Caco-2 (cell line): ENCODE measurements at regions of chr12 and their contacts with region 1.

Region 1: GRCh38 chr12:48758221-48758620 is 30.7 kb downstream of the ADCY6 start:
- DNase-seq: no peak
- H3K4me3 ChIP-seq: no peak overlapping the region
- H3K4me3 Mint-ChIP-seq: peak overlapping the region; percentile 0
- H3K27ac Mint-ChIP-seq: peak overlapping the region; percentile 79
- H3K4me1 ChIP-seq: peaks cover 22% of the 10 kb centered on the region
- H3K4me1 Mint-ChIP-seq: peaks cover 12% of the 10 kb centered on the region
- H3K27me3 ChIP-seq: no peaks in the 10 kb centered on the region
- H3K27me3 Mint-ChIP-seq: no peaks in the 10 kb centered on the region
- CTCF ChIP-seq: no peak

Region 2: DNA sequence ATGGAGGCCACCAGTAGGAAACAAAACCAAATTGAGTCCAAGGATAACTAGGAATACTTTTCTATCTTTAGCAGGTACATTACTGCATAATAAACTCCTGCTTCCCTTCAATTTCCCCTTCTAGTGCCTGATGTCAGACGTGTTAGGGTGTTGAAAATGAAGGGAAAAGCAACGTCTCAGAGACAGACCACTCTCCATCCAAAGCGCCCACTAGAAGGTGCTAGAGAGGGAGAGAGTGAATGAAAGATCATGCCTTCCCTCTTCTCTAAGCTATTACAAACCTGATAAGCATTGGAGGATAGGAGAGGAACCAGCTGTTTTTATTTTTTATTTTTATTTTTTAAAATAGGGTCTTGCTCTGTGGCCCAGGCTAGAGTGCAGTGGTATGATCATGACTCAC is 471.6 kb before region 1 on chr12:
- CTCF ChIA-PET with region 1: no interaction called
- POLR2A ChIA-PET with region 1: no interaction called
- intact Hi-C with region 1: no loop called
- DNase-seq: peak in 1 of 2 experiments; percentile 31
- H3K4me3 ChIP-seq: no peak overlapping the region
- H3K4me3 Mint-ChIP-seq: no peak overlapping the region
- H3K27ac Mint-ChIP-seq: no peak overlapping the region
- H3K4me1 ChIP-seq: no peaks in the 10 kb centered on the region
- H3K4me1 Mint-ChIP-seq: no peaks in the 10 kb centered on the region
- H3K27me3 ChIP-seq: no peaks in the 10 kb centered on the region
- H3K27me3 Mint-ChIP-seq: peaks cover 10% of the 10 kb centered on the region
- CTCF ChIP-seq: peak; percentile 44 to 63

Region 3: GRCh38 chr12:48681738-48682532 is 76.3 kb before region 1 on chr12 and contains the start of gene KANSL2:
- CTCF ChIA-PET with region 1: interaction called, 7 read pairs
- POLR2A ChIA-PET with region 1: interaction called, 11 read pairs
- intact Hi-C with region 1: no loop called
- DNase-seq: peak; percentile 99
- H3K4me3 ChIP-seq: peak within 1 kb of the TSS; percentile 83
- H3K4me3 Mint-ChIP-seq: peak within 1 kb of the TSS; percentile 92
- H3K27ac Mint-ChIP-seq: peak within 1 kb of the TSS; percentile 93
- H3K4me1 ChIP-seq: peaks cover 24% of the 10 kb centered on the region; the same call in 1 of the 2 replicates
- H3K4me1 Mint-ChIP-seq: peaks cover 14% of the 10 kb centered on the region
- H3K27me3 ChIP-seq: no peaks in the 10 kb centered on the region
- H3K27me3 Mint-ChIP-seq: no peaks in the 10 kb centered on the region
- CTCF ChIP-seq: no peak
- total RNA-seq, gene KANSL2: 59.7 and 67.2 TPM in 2 replicates

Region 4: GRCh38 chr12:48728807-48729206 is 29.4 kb before region 1 on chr12:
- CTCF ChIA-PET with region 1: no interaction called
- POLR2A ChIA-PET with region 1: no interaction called
- intact Hi-C with region 1: no loop called
- DNase-seq: no peak
- H3K4me3 ChIP-seq: no peak overlapping the region
- H3K4me3 Mint-ChIP-seq: no peak overlapping the region
- H3K27ac Mint-ChIP-seq: no peak overlapping the region
- H3K4me1 ChIP-seq: peaks cover 6% of the 10 kb centered on the region
- H3K4me1 Mint-ChIP-seq: no peaks in the 10 kb centered on the region
- H3K27me3 ChIP-seq: no peaks in the 10 kb centered on the region
- H3K27me3 Mint-ChIP-seq: no peaks in the 10 kb centered on the region
- CTCF ChIP-seq: no peak

Region 5: DNA sequence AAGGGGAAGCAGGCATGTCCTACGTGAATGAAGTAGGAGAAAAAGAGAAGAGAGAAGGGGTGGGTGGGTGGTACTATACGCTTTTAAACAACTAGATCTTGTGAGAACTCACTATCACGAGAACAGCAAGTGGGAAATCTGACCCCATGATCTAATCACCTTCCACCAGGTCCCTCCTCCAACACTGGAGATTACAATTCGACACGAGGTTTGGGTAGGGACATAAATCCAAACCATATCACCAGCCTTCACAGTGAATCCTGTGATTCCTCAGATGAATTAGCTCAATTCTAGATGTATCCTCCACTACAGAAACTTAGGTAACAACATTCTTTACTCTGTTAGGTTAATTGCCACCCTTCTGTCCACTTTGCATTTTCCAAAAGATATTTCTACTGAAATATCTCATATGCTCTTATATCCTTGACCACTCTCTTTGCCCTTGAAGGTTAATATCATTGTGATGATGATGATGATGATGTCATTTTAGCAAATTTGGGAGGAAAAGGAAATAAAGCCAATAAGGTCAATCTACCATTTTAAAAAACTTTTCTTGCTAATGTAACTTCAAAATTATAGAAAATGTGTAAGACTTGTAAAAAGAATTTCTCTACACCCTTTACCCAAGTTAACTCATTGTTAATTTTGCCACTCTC is 18.5 kb before region 1 on chr12:
- CTCF ChIA-PET with region 1: interaction called, 8 read pairs
- POLR2A ChIA-PET with region 1: interaction called, 14 read pairs
- intact Hi-C with region 1: no loop called
- DNase-seq: no peak
- H3K4me3 ChIP-seq: no peak overlapping the region
- H3K4me3 Mint-ChIP-seq: no peak overlapping the region
- H3K27ac Mint-ChIP-seq: no peak overlapping the region
- H3K4me1 ChIP-seq: no peaks in the 10 kb centered on the region
- H3K4me1 Mint-ChIP-seq: no peaks in the 10 kb centered on the region
- H3K27me3 ChIP-seq: no peaks in the 10 kb centered on the region
- H3K27me3 Mint-ChIP-seq: peaks cover 4% of the 10 kb centered on the region
- CTCF ChIP-seq: no peak

Region 6: DNA sequence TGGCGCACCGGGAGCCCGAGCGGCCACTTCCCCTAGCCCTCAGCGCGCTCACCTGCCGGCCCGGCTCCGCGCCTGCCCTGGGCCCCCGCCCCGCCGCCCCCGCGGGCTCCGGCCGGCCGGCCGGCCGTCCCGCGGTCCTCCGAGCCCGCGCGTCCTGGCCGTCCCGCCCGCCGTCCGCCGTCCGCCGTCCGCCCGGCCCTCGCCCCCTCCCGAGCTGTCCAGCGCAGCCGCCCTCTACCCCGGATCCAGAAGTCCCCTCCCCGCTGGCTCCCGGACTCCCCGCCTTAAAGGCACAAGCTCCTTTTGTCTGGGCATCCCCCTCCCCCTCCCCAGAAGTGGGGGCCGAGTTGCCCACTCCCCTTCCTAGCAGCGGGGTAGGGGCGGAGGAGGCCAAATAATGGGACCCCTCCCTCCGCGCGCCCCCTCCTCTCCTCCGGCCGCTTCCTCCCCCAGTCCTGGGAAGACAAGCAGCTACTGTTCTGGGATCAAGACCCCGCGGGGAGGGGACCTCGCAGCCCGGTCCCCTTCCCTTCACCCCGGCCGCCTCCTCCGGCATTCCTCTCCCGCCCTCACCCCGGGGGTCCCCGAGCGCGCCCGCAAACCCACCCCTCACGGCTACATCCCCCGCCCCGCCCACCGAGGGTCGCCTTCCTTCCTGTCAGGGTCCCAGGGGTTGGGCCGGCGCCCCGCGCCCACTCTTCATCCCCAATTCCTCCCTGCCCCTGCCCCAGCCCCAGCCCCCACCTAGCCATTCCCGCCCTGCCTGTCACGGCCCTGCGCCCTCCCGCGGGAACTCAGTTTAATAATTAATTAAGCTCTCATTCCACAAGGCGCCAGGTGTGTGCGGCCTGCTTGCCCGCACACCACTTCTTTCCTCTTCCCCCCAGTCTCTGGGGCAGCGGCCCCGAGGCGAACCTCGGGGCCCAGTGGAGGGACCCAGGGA is 30.9 kb after region 1 on chr12 and contains the start of gene ADCY6:
- CTCF ChIA-PET with region 1: interaction called, 148 read pairs
- POLR2A ChIA-PET with region 1: interaction called, 27 read pairs
- intact Hi-C with region 1: loop called (anchors 1 kb)
- DNase-seq: peak; percentile 94
- H3K4me3 ChIP-seq: peak within 1 kb of the TSS; percentile 88
- H3K4me3 Mint-ChIP-seq: peak within 1 kb of the TSS; percentile 84
- H3K27ac Mint-ChIP-seq: peak within 1 kb of the TSS; percentile 91
- H3K4me1 ChIP-seq: peaks cover 29% of the 10 kb centered on the region
- H3K4me1 Mint-ChIP-seq: peaks cover 13% of the 10 kb centered on the region
- H3K27me3 ChIP-seq: no peaks in the 10 kb centered on the region
- H3K27me3 Mint-ChIP-seq: no peaks in the 10 kb centered on the region
- CTCF ChIP-seq: no peak
- total RNA-seq, gene ADCY6: 89.8 and 92.9 TPM in 2 replicates

Region 7: GRCh38 chr12:48795480-48796455 is 37.5 kb after region 1 on chr12:
- CTCF ChIA-PET with region 1: interaction called, 148 read pairs
- POLR2A ChIA-PET with region 1: interaction called, 13 read pairs
- intact Hi-C with region 1: loop called (anchors 1 kb)
- DNase-seq: peak; percentile 85 to 86
- H3K4me3 ChIP-seq: no peak overlapping the region
- H3K4me3 Mint-ChIP-seq: peak overlapping the region; percentile 49
- H3K27ac Mint-ChIP-seq: peak overlapping the region; percentile 34
- H3K4me1 ChIP-seq: peaks cover 25% of the 10 kb centered on the region
- H3K4me1 Mint-ChIP-seq: peaks cover 9% of the 10 kb centered on the region
- H3K27me3 ChIP-seq: no peaks in the 10 kb centered on the region
- H3K27me3 Mint-ChIP-seq: no peaks in the 10 kb centered on the region
- CTCF ChIP-seq: peak; percentile 97 to 98

Region 8: DNA sequence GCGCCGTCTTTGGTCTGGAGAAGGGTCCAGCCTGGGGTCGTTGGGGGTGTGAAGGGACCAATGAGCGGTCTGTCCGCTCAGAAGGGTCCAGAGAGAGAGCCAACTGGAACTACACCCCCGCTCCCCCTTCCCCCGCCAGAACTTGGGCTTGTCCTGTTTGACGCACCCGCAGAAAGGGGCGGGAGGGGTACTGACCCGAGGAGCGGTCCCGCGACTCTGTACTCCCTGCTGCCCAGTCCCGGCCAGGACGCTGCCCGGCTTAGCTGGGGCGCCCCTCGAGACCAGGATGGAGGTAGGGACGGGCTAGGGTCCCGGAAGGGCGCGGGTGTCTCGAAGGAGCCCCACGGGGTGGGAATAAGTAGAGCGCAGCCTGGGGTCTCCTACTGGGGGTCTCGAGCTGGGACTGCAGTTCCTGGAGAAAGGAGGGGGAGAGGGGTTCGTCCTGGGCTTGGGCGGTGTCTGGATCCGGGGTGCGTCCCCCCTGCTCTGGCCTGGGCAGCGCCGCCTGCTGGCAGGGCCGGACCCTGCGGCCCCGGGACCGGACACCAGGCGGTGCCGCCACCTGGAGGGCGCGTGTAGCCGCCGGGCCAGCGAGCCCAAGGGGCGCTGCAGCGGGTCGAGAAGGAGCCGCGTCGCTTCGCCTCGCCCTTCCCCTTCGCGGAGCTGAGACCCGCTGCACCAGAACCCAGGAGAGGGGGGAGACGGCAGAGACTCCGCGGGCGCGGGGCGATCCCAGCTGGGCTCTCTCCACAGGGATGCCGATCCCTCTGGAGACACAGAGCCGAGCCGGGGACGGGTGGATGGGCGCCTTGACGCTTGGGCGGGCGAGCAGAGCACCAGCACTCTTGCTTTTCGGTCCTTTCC is 56.3 kb after region 1 on chr12:
- CTCF ChIA-PET with region 1: interaction called, 34 read pairs
- POLR2A ChIA-PET with region 1: no interaction called
- intact Hi-C with region 1: no loop called
- DNase-seq: peak; percentile 83 to 96
- H3K4me3 ChIP-seq: peak overlapping the region; percentile 91
- H3K4me3 Mint-ChIP-seq: peak overlapping the region; percentile 97
- H3K27ac Mint-ChIP-seq: peak overlapping the region; percentile 58
- H3K4me1 ChIP-seq: peaks cover 21% of the 10 kb centered on the region
- H3K4me1 Mint-ChIP-seq: peaks cover 18% of the 10 kb centered on the region
- H3K27me3 ChIP-seq: no peaks in the 10 kb centered on the region
- H3K27me3 Mint-ChIP-seq: no peaks in the 10 kb centered on the region
- CTCF ChIP-seq: peak; percentile 99

Region 9: DNA sequence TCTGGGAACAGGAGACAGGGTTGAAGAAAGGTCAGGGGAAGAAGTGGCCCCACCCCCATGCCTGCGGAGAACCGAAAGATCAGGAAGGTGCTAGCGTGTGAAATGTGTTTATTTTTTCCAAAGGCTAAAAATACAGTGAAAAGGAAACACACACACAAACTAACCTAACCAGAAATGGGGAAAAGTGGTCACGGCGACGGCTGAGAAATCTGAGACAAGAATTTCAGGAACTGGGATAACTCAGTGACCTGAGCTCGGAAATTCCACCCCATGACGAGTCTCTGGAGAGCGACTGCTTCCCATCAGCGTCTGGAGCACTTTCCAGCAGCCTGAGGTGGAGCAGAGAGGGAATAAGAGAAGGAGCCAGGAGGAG is 124.1 kb after region 1 on chr12:
- CTCF ChIA-PET with region 1: interaction called, 11 read pairs
- POLR2A ChIA-PET with region 1: no interaction called
- intact Hi-C with region 1: no loop called
- DNase-seq: peak; percentile 48 to 60
- H3K4me3 ChIP-seq: no peak overlapping the region
- H3K4me3 Mint-ChIP-seq: peak overlapping the region; percentile 70
- H3K27ac Mint-ChIP-seq: peak overlapping the region; percentile 96
- H3K4me1 ChIP-seq: peaks cover 70% of the 10 kb centered on the region
- H3K4me1 Mint-ChIP-seq: peaks cover 68% of the 10 kb centered on the region
- H3K27me3 ChIP-seq: no peaks in the 10 kb centered on the region
- H3K27me3 Mint-ChIP-seq: no peaks in the 10 kb centered on the region
- CTCF ChIP-seq: no peak